Activated CD4-positive, alpha-beta memory T cell treated with anti-CD3 and anti-CD28 coated beads, Interleukin-2, amount 10 ng/mL, durations not matched to agents 7 days and 5 days (primary cell): ENCODE measurements at regions of chr1 and their contacts with region 1.

Region 1: GRCh38 chr1:27725374-27726173 is at the start of gene FAM76A:
- DNase-seq: peak; percentile 100
- H3K4me3 Mint-ChIP-seq: peak within 1 kb of the TSS; percentile 79
- H3K27ac Mint-ChIP-seq: peak within 1 kb of the TSS; percentile 73
- H3K4me1 Mint-ChIP-seq: peaks cover 24% of the 10 kb centered on the region
- H3K27me3 Mint-ChIP-seq: peaks cover 3% of the 10 kb centered on the region
- total RNA-seq, gene FAM76A: 13.6 to 14.1 TPM

Region 2: GRCh38 chr1:27772933-27773825 is 47.6 kb after region 1 on chr1 and contains the start of gene STX12:
- CTCF ChIA-PET with region 1: interaction called, 35 read pairs
- POLR2A ChIA-PET with region 1: interaction called, 34 read pairs
- DNase-seq: peak; percentile 100
- H3K4me3 Mint-ChIP-seq: peak within 1 kb of the TSS; percentile 94
- H3K27ac Mint-ChIP-seq: peak within 1 kb of the TSS; percentile 94
- H3K4me1 Mint-ChIP-seq: peaks cover 33% of the 10 kb centered on the region
- H3K27me3 Mint-ChIP-seq: no peaks in the 10 kb centered on the region
- total RNA-seq, gene STX12: 32.0 to 33.1 TPM

Region 3: GRCh38 chr1:27830621-27831424 is 105.2 kb after region 1 on chr1 and contains the start of gene PPP1R8:
- CTCF ChIA-PET with region 1: interaction called, 6 read pairs
- POLR2A ChIA-PET with region 1: interaction called, 11 read pairs
- DNase-seq: peak; percentile 89
- H3K4me3 Mint-ChIP-seq: peak within 1 kb of the TSS; percentile 93
- H3K27ac Mint-ChIP-seq: peak within 1 kb of the TSS; percentile 83
- H3K4me1 Mint-ChIP-seq: peaks cover 37% of the 10 kb centered on the region
- H3K27me3 Mint-ChIP-seq: no peaks in the 10 kb centered on the region
- total RNA-seq, gene PPP1R8: 48.5 to 51.2 TPM

Region 4: GRCh38 chr1:27999055-27999454 is 273.5 kb after region 1 on chr1:
- CTCF ChIA-PET with region 1: no interaction called
- POLR2A ChIA-PET with region 1: no interaction called
- DNase-seq: no peak
- H3K4me3 Mint-ChIP-seq: no peak overlapping the region
- H3K27ac Mint-ChIP-seq: no peak overlapping the region
- H3K4me1 Mint-ChIP-seq: peaks cover 2% of the 10 kb centered on the region
- H3K27me3 Mint-ChIP-seq: no peaks in the 10 kb centered on the region